HepG2 (cell line): ENCODE measurements at regions of chr2 and their contacts with region 1.

Region 1: DNA sequence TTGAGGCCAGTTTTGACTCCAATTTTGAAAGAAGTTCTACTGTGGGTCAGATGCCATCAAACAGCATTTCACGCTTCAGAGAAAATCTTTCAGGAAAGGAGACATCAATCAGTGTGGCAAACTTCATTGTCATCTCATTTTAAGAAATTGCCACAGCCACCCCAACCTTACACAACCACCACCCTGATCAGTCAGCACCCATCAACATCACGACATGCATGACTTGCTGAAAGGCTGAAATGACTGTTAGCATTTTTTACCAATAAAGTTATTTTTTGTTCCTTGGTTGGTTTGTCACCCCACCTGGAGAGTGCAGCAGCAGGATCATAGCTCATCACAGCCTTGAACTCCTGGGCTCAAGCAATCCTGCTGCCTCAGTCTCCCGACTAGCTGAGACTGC is 10.4 kb downstream of the DNAJC10 start:
- DNase-seq: no peak
- ATAC-seq: no peak
- H3K4me3 ChIP-seq: no peak overlapping the region
- H3K27ac ChIP-seq: no peak overlapping the region
- H3K4me1 ChIP-seq: peaks cover 8% of the 10 kb centered on the region; the same call in 1 of the 2 replicates
- H3K27me3 ChIP-seq: no peaks in the 10 kb centered on the region
- CTCF ChIP-seq: no peak
- EP300 ChIP-seq: no peak
- POLR2A ChIP-seq: no peak
- RAD21 ChIP-seq: no peak

Region 2: GRCh38 chr2:182715896-182716668 is 10.4 kb before region 1 on chr2 and contains the start of gene DNAJC10:
- CTCF ChIA-PET with region 1: no interaction called
- POLR2A ChIA-PET with region 1: interaction called, 11 read pairs
- in situ Hi-C with region 1: no loop called
- intact Hi-C with region 1: no loop called
- DNase-seq: peak; percentile 87
- ATAC-seq: peak; percentile 97
- H3K4me3 ChIP-seq: peak within 1 kb of the TSS; percentile 88 to 100 (median 98)
- H3K27ac ChIP-seq: peak within 1 kb of the TSS; percentile 81
- H3K4me1 ChIP-seq: peaks cover 27% of the 10 kb centered on the region
- H3K27me3 ChIP-seq: no peaks in the 10 kb centered on the region; a peak in 1 of 5 replicates
- CTCF ChIP-seq: no peak; the same call in 1 of the 2 replicates
- EP300 ChIP-seq: no peak; a peak in 1 of 4 replicates
- POLR2A ChIP-seq: peak; percentile 77 to 98; a peak in 3 of 4 replicates
- RAD21 ChIP-seq: peak; percentile 51; the same call in 1 of the 2 replicates
- total RNA-seq, gene DNAJC10: 178 and 190 TPM in 2 replicates

Region 3: GRCh38 chr2:183759033-183759432 is 1032.6 kb after region 1 on chr2:
- CTCF ChIA-PET with region 1: no interaction called
- POLR2A ChIA-PET with region 1: no interaction called
- in situ Hi-C with region 1: no loop called
- intact Hi-C with region 1: loop called (anchors 10 kb)
- DNase-seq: no peak
- ATAC-seq: no peak
- H3K4me3 ChIP-seq: no peak overlapping the region
- H3K27ac ChIP-seq: no peak overlapping the region
- H3K4me1 ChIP-seq: no peaks in the 10 kb centered on the region
- H3K27me3 ChIP-seq: no peaks in the 10 kb centered on the region
- CTCF ChIP-seq: no peak
- EP300 ChIP-seq: no peak
- POLR2A ChIP-seq: no peak
- RAD21 ChIP-seq: no peak